ENCODE measurements at regions of chr16 and their contacts with region 1.

Region 1: GRCh38 chr16:88856828-88857733 is at the starts of genes GALNS and TRAPPC2L:
- DNase-seq: peak; percentile 94 to 98
- H3K4me3 ChIP-seq: peak within 1 kb of the TSS; percentile 99
- H3K27ac ChIP-seq: peak within 1 kb of the TSS; percentile 84
- H3K4me1 ChIP-seq: peaks cover 45% of the 10 kb centered on the region
- H3K27me3 ChIP-seq: no peaks in the 10 kb centered on the region
- CTCF ChIP-seq: no peak
- POLR2A ChIP-seq: peak in 1 of 2 donors; percentile 49
- total RNA-seq, gene GALNS: 61.4 TPM
- total RNA-seq, gene TRAPPC2L: 50.8 TPM

Region 2: DNA sequence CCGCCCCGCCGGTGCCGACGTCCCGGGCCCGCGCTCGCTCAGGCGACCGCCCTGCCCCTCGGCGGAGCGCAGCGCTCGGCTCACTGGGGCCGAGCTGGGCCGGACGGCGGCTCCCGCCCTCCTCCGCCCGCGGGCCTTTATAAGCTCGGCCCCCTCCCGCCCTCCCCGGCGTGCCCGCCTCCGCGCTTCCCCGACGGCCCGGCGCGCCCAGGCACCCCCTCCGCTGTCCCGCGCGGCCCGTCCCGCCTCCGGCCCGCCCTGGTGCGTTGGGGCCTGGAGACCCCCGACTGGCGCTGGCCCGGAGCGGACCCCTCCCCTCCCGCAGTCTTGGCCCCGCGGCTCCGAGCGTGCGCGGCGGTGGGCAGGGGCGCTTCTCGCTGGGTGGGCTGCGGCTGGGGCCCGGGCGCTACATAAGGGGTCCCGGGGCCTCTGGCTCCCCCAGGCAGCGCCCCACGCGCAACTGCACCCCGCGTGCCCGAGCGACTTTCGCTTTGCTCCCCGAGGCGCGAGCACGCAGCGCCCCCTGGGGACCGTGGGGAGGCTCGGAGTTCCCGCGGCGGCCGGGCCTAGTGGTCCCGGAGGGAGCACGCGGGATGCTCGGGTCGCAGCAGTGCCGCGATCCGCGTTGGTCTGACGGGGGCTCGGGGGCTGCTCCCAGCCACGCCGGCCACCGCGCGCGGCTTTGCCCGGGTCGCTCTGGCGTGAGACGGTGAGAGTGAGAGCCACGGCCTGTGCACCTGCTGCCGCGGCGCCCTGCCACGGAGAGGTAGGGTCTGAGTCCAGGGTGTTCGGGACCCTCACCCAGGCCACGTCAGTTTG is 71.8 kb before region 1 on chr16 and contains the start of gene PIEZO1:
- intact Hi-C with region 1: loop called (anchors 1 kb)
- DNase-seq: no peak
- H3K4me3 ChIP-seq: peak within 1 kb of the TSS; percentile 72 to 95
- H3K27ac ChIP-seq: peak within 1 kb of the TSS; percentile 96
- H3K4me1 ChIP-seq: peaks cover 44% of the 10 kb centered on the region
- H3K27me3 ChIP-seq: no peaks in the 10 kb centered on the region
- CTCF ChIP-seq: peak; percentile 93 to 95 (median 94)
- POLR2A ChIP-seq: peak in 1 of 2 donors; percentile 56
- total RNA-seq, gene PIEZO1: 184 TPM

Region 3: GRCh38 chr16:88815901-88816589 is 41.0 kb before region 1 on chr16:
- intact Hi-C with region 1: loop called (anchors 5 kb)
- DNase-seq: no peak
- H3K4me3 ChIP-seq: no peak overlapping the region
- H3K27ac ChIP-seq: no peak overlapping the region
- H3K4me1 ChIP-seq: peaks cover 18% of the 10 kb centered on the region
- H3K27me3 ChIP-seq: no peaks in the 10 kb centered on the region
- CTCF ChIP-seq: peak; percentile 40 to 59 (median 44)
- POLR2A ChIP-seq: no peak

Region 4: GRCh38 chr16:88940862-88941828 is 84.1 kb after region 1 on chr16:
- intact Hi-C with region 1: no loop called
- DNase-seq: no peak
- H3K4me3 ChIP-seq: peak overlapping the region; percentile 39 to 45
- H3K27ac ChIP-seq: peak overlapping the region; percentile 60
- H3K4me1 ChIP-seq: peaks cover 50% of the 10 kb centered on the region
- H3K27me3 ChIP-seq: no peaks in the 10 kb centered on the region
- CTCF ChIP-seq: no peak
- POLR2A ChIP-seq: no peak

Measured in vagina (tissue), 2 donors.